Right ventricle myocardium inferior (tissue), 1 donor: ENCODE measurements at regions of chr15 and their contacts with region 1.

Region 1: GRCh38 chr15:53000410-53000809 is 210.3 kb upstream of the ONECUT1 start:
- DNase-seq: no peak
- ATAC-seq: no peak

Region 2: GRCh38 chr15:52943746-52944145 is 56.7 kb before region 1 on chr15:
- intact Hi-C with region 1: loop called (anchors 10 kb)
- DNase-seq: no peak
- ATAC-seq: no peak